CD8-positive, alpha-beta T cell (primary cell): ENCODE measurements at regions of chr3 and their contacts with region 1.

Region 1: DNA sequence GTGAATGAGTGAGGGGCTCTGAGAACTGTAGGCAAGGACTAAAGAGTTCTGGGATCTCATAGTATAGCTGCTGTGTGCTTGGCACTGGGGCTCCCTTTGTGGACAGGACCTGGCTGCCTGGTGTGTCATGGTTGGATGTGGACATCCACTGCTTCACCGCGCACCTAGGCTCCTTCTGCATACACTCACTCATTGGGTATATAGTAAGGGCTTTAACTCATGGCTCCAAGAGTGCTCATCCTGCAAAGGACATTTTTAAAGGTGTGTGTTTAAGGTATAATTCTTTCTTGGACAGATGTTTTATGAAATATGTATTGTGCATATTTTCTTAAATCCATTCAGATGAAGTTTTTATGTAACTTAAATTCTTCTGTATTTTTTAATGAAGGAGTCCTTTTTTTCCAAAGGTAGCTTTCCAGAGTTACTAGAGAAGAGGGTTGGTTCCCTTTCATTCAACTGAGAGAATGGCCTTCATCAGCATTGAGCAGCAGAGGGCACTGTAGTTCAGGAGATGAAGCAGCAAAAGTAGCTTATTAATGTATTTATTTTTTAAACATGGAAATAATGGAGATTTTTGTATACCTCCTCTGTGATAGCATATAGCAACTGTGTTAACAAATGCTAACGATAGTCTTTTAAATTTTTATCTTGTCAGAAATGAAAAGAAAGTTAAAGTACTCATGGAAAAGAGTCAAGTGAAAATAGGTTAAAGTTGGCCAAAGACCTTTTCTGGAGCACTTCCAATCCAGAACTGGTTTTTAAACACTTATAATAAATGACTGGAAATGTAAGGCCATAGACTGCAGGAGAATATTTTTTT is 25.2 kb downstream of the OXNAD1 start:
- DNase-seq: peak in 7 of 9 experiments; percentile 38 to 78 (median 62)
- ATAC-seq: peak; percentile 7
- H3K4me3 ChIP-seq: peak overlapping the region; percentile 70 to 71
- H3K4me3 Mint-ChIP-seq: peak overlapping the region; percentile 91
- H3K27ac ChIP-seq: peak overlapping the region; percentile 81 to 86
- H3K27ac Mint-ChIP-seq: peak overlapping the region; percentile 95
- H3K4me1 ChIP-seq: peaks cover 39% of the 10 kb centered on the region
- H3K4me1 Mint-ChIP-seq: peaks cover 71% of the 10 kb centered on the region
- H3K27me3 ChIP-seq: no peaks in the 10 kb centered on the region
- H3K27me3 Mint-ChIP-seq: no peaks in the 10 kb centered on the region
- CTCF ChIP-seq: peak; percentile 98

Region 2: DNA sequence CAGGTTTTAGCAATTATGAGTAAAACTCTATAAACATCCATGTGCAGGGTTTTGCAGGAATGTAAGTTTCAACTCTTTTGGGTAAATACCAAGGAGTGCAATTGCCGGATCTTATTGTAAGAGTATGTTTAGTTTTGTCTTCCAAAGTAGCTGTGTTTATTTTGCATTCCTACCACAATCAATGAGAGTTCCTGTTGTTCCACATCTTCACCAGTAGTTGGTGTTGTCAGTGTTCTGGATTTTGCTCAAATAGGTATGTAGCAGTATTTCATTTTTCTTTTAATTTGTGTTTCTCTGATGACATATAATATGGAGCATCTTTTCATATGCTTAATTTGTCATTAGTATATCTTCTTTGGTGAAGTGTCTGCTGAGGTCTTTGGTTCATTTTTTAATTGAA is 300.8 kb before region 1 on chr3:
- CTCF ChIA-PET with region 1: no interaction called
- POLR2A ChIA-PET with region 1: no interaction called
- intact Hi-C with region 1: no loop called
- DNase-seq: no peak
- ATAC-seq: no peak
- H3K4me3 ChIP-seq: no peak overlapping the region
- H3K4me3 Mint-ChIP-seq: no peak overlapping the region
- H3K27ac ChIP-seq: no peak overlapping the region
- H3K27ac Mint-ChIP-seq: no peak overlapping the region
- H3K4me1 ChIP-seq: no peaks in the 10 kb centered on the region
- H3K4me1 Mint-ChIP-seq: no peaks in the 10 kb centered on the region
- H3K27me3 ChIP-seq: no peaks in the 10 kb centered on the region
- H3K27me3 Mint-ChIP-seq: peaks cover 2% of the 10 kb centered on the region
- CTCF ChIP-seq: no peak

Region 3: DNA sequence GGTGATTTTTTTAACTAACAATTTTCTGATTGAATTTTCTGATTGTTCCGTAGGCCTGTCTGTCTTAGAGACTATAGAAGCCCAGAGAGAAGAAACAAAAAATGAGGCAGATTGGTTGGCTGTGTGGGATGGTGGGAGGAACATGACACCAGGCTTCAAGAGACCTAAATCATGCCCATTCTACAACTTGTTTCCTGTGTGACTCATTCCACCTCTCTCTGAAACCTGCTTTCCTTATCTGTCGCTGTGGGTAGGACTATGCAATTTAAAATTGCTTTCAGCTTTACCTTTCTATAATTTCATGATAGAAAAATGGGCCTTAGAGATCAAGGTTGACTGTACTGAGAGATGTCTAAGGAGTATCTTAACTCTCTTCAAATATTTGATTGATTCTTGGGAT is 19.3 kb after region 1 on chr3:
- CTCF ChIA-PET with region 1: interaction called, 388 read pairs
- POLR2A ChIA-PET with region 1: interaction called, 32 read pairs
- intact Hi-C with region 1: no loop called
- DNase-seq: peak in 7 of 9 experiments; percentile 34 to 88 (median 58)
- ATAC-seq: peak; percentile 73
- H3K4me3 ChIP-seq: no peak overlapping the region
- H3K4me3 Mint-ChIP-seq: peak overlapping the region; percentile 72
- H3K27ac ChIP-seq: peak overlapping the region; percentile 11 to 69
- H3K27ac Mint-ChIP-seq: peak overlapping the region; percentile 97
- H3K4me1 ChIP-seq: peaks cover 94% of the 10 kb centered on the region
- H3K4me1 Mint-ChIP-seq: peaks cover 92% of the 10 kb centered on the region
- H3K27me3 ChIP-seq: no peaks in the 10 kb centered on the region
- H3K27me3 Mint-ChIP-seq: no peaks in the 10 kb centered on the region
- CTCF ChIP-seq: no peak

Region 4: GRCh38 chr3:16362770-16363169 is 72.6 kb after region 1 on chr3:
- CTCF ChIA-PET with region 1: interaction called, 11 read pairs
- POLR2A ChIA-PET with region 1: no interaction called
- intact Hi-C with region 1: no loop called
- DNase-seq: no peak
- ATAC-seq: no peak
- H3K4me3 ChIP-seq: no peak overlapping the region
- H3K4me3 Mint-ChIP-seq: no peak overlapping the region
- H3K27ac ChIP-seq: no peak overlapping the region
- H3K27ac Mint-ChIP-seq: peak overlapping the region; percentile 64
- H3K4me1 ChIP-seq: peaks cover 7% of the 10 kb centered on the region
- H3K4me1 Mint-ChIP-seq: peaks cover 52% of the 10 kb centered on the region
- H3K27me3 ChIP-seq: no peaks in the 10 kb centered on the region
- H3K27me3 Mint-ChIP-seq: no peaks in the 10 kb centered on the region
- CTCF ChIP-seq: no peak

Region 5: DNA sequence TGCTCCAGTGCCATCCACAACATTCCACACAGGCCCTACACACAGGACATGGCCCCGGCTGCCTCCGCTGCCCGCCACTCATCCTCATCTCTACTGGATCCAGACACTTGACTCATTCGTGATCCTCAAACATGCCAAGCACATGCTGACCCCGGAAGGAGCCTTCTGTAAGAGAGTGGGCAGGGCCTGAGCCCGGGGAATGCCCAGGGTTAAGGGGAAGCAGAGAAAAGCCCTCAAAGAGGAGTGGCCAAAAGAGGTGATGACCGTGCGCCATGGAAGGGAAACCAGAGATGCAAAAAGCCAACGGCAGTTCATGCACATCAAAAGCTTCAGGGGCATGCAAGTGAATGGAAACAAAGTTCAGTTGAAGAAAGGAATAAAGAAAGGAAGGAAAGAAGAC is 177.2 kb after region 1 on chr3:
- CTCF ChIA-PET with region 1: no interaction called
- POLR2A ChIA-PET with region 1: no interaction called
- intact Hi-C with region 1: loop called (anchors 5 kb)
- DNase-seq: peak in 5 of 9 experiments; percentile 20 to 85 (median 60)
- ATAC-seq: peak; percentile 66
- H3K4me3 ChIP-seq: no peak overlapping the region
- H3K4me3 Mint-ChIP-seq: peak overlapping the region; percentile 69
- H3K27ac ChIP-seq: peak overlapping the region; percentile 44 to 48
- H3K27ac Mint-ChIP-seq: peak overlapping the region; percentile 93
- H3K4me1 ChIP-seq: peaks cover 42% of the 10 kb centered on the region
- H3K4me1 Mint-ChIP-seq: peaks cover 70% of the 10 kb centered on the region
- H3K27me3 ChIP-seq: no peaks in the 10 kb centered on the region
- H3K27me3 Mint-ChIP-seq: no peaks in the 10 kb centered on the region
- CTCF ChIP-seq: no peak

Region 6: DNA sequence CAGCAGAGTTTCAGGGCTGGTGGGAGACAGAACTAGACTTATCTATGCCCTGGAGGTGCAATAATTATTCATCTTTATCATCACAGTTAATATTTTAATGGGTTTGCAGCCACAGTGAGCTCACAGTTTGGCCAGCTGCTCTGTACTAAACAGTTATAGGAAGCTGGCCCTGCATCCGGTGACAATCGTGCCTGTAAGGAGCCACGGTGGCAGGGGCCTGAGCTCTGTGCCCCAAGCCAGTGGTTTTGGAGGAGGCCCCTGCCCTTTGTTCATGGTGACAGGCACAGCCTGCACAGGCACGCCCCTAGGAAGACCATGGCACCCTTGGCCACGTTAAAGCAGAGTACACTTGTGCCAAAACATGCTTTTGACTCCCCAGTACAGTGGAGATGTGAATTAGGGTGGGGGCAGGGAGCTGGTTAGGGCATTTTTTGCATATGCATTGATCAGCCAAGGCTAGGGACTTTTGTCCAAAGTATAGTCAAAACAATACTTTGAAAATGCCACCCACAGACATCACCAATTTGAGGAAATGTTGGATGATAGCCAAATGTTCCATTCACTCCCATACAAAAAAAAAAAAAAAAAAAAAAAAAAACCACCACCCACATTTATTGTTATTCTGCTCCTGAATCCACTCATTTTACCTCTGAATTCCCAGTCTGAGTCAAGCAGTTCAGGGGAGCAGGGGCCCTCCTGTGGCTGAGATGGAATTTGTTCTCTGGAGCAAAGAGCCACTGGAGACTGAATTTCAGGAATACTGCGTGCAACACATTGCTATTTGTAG is 226.7 kb after region 1 on chr3:
- CTCF ChIA-PET with region 1: interaction called, 14 read pairs
- POLR2A ChIA-PET with region 1: interaction called, 6 read pairs
- intact Hi-C with region 1: loop called (anchors 1 to 2 kb)
- DNase-seq: peak in 2 of 9 experiments; percentile 41 to 60
- ATAC-seq: no peak
- H3K4me3 ChIP-seq: no peak overlapping the region
- H3K4me3 Mint-ChIP-seq: peak overlapping the region; percentile 96
- H3K27ac ChIP-seq: peak overlapping the region in 1 of 2 experiments; percentile 74
- H3K27ac Mint-ChIP-seq: peak overlapping the region; percentile 16
- H3K4me1 ChIP-seq: peaks cover 42% of the 10 kb centered on the region
- H3K4me1 Mint-ChIP-seq: peaks cover 55% of the 10 kb centered on the region
- H3K27me3 ChIP-seq: no peaks in the 10 kb centered on the region
- H3K27me3 Mint-ChIP-seq: no peaks in the 10 kb centered on the region
- CTCF ChIP-seq: no peak

Region 7: DNA sequence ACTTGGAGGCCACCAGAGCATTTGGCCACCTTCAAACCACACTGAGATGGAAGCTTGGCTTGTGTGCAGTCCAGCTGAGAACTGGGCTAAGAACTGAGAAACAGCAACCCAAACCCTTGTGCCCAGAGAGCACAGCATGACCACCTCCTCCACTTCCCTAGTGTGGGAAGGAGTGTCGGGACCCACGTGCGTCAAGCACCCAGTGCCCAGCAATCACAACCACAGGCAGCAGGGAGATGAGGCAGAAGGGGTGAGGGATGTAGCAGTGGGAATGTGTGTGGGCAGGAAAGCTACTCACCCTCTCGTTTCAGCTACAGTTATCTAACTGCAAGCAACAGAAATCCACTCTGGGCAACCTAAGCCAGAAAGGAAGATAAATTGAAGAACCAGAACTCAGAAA is 248.3 kb after region 1 on chr3:
- CTCF ChIA-PET with region 1: interaction called, 11 read pairs
- POLR2A ChIA-PET with region 1: no interaction called
- intact Hi-C with region 1: no loop called
- DNase-seq: no peak
- ATAC-seq: no peak
- H3K4me3 ChIP-seq: no peak overlapping the region
- H3K4me3 Mint-ChIP-seq: no peak overlapping the region
- H3K27ac ChIP-seq: no peak overlapping the region
- H3K27ac Mint-ChIP-seq: no peak overlapping the region
- H3K4me1 ChIP-seq: no peaks in the 10 kb centered on the region
- H3K4me1 Mint-ChIP-seq: no peaks in the 10 kb centered on the region
- H3K27me3 ChIP-seq: no peaks in the 10 kb centered on the region
- H3K27me3 Mint-ChIP-seq: peaks cover 8% of the 10 kb centered on the region
- CTCF ChIP-seq: no peak

Region 8: GRCh38 chr3:17233398-17233800 is 943.2 kb after region 1 on chr3:
- CTCF ChIA-PET with region 1: no interaction called
- POLR2A ChIA-PET with region 1: no interaction called
- intact Hi-C with region 1: loop called in 1 of 2 experiments (anchors 10 kb)
- DNase-seq: peak in 7 of 9 experiments; percentile 7 to 79 (median 35)
- ATAC-seq: peak; percentile 99
- H3K4me3 ChIP-seq: no peak overlapping the region
- H3K4me3 Mint-ChIP-seq: no peak overlapping the region
- H3K27ac ChIP-seq: no peak overlapping the region
- H3K27ac Mint-ChIP-seq: peak overlapping the region; percentile 3
- H3K4me1 ChIP-seq: peaks cover 20% of the 10 kb centered on the region
- H3K4me1 Mint-ChIP-seq: peaks cover 24% of the 10 kb centered on the region
- H3K27me3 ChIP-seq: no peaks in the 10 kb centered on the region
- H3K27me3 Mint-ChIP-seq: no peaks in the 10 kb centered on the region
- CTCF ChIP-seq: peak; percentile 84